PC-9 (cell line): ENCODE measurements at regions of chr11 and their contacts with region 1.

Region 1: GRCh38 chr11:129743111-129743815 is 72.4 kb upstream of the TMEM45B start:
- DNase-seq: no peak
- H3K4me3 ChIP-seq: no peak overlapping the region
- H3K27ac ChIP-seq: no peak overlapping the region
- H3K4me1 ChIP-seq: peaks cover 20% of the 10 kb centered on the region
- H3K27me3 ChIP-seq: no peaks in the 10 kb centered on the region
- CTCF ChIP-seq: no peak

Region 2: GRCh38 chr11:129440028-129440713 is 303.1 kb before region 1 on chr11:
- CTCF ChIA-PET with region 1: no interaction called
- POLR2A ChIA-PET with region 1: no interaction called
- intact Hi-C with region 1: loop called (anchors 2 kb)
- DNase-seq: peak; percentile 75 to 99
- H3K4me3 ChIP-seq: no peak overlapping the region
- H3K27ac ChIP-seq: peak overlapping the region; percentile 71
- H3K4me1 ChIP-seq: peaks cover 32% of the 10 kb centered on the region
- H3K27me3 ChIP-seq: no peaks in the 10 kb centered on the region
- CTCF ChIP-seq: no peak

Region 3: GRCh38 chr11:129593098-129593497 is 150.2 kb before region 1 on chr11:
- CTCF ChIA-PET with region 1: no interaction called
- POLR2A ChIA-PET with region 1: no interaction called
- intact Hi-C with region 1: loop called (anchors 5 kb)
- DNase-seq: peak; percentile 69 to 91
- H3K4me3 ChIP-seq: no peak overlapping the region
- H3K27ac ChIP-seq: no peak overlapping the region
- H3K4me1 ChIP-seq: peaks cover 15% of the 10 kb centered on the region
- H3K27me3 ChIP-seq: no peaks in the 10 kb centered on the region
- CTCF ChIP-seq: no peak

Region 4: GRCh38 chr11:129639300-129639699 is 104.0 kb before region 1 on chr11:
- CTCF ChIA-PET with region 1: no interaction called
- POLR2A ChIA-PET with region 1: no interaction called
- intact Hi-C with region 1: loop called (anchors 2 kb)
- DNase-seq: peak; percentile 49 to 97
- H3K4me3 ChIP-seq: no peak overlapping the region
- H3K27ac ChIP-seq: peak overlapping the region; percentile 92
- H3K4me1 ChIP-seq: peaks cover 72% of the 10 kb centered on the region
- H3K27me3 ChIP-seq: no peaks in the 10 kb centered on the region
- CTCF ChIP-seq: no peak